Activated T-helper 1 cell treated with anti-CD3 and anti-CD28 coated beads, Interleukin-12 subunit alpha, Interleukin-12 subunit beta, Interleukin-2, Interleukin-4 antibody, amounts not matched to agents 30 ng/mL and 10 ng/mL and 1 ng/mL, durations not matched to agents 14 hours and 24 hours and 36 hours (primary cell): ENCODE measurements at regions of chr4 and their contacts with region 1.

Region 1: DNA sequence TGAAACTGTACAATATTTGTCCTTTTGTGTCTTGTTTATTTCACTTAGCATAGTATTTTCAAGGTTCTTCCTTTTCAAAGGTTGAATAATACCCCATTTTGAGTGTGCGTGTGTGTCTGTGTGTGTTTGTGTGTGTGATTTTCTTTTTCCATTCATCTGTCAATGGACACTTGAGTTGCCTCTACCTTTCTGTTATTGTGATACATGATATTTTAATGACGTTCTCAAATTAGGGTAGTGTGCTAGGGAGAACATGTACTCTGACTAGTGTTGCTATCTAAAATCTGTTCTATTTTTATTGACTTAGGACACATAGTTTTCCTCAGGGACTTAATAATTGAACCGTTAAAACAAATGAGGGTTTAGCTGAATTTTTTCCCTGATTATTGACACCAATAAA is 9.9 kb downstream of the MMRN1 start:
- DNase-seq: no peak
- H3K4me3 Mint-ChIP-seq: no peak overlapping the region
- H3K27ac Mint-ChIP-seq: no peak overlapping the region
- H3K4me1 Mint-ChIP-seq: no peaks in the 10 kb centered on the region
- H3K27me3 Mint-ChIP-seq: peaks cover 2% of the 10 kb centered on the region

Region 2: DNA sequence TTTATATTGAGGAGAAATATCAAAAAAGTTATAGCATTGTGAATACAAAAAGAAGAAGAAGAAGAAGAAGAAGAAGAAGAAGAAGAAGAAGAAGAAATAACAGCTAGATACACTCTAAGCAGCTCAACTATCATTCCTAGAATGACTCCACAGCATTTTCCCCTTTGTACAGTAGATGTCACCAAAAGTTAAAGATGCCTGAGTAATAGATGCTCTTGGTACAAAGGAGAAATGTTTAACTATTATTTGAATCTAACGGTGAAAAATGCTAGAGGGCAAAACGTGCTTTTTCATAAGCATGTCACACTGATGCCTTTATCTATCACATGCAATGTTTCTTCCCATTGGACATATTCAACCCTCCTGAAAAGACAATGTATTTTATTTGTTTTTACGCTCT is 418.5 kb before region 1 on chr4:
- intact Hi-C with region 1: loop called (anchors 5 kb)
- DNase-seq: no peak
- H3K4me3 Mint-ChIP-seq: no peak overlapping the region
- H3K27ac Mint-ChIP-seq: no peak overlapping the region
- H3K4me1 Mint-ChIP-seq: no peaks in the 10 kb centered on the region
- H3K27me3 Mint-ChIP-seq: peaks cover 2% of the 10 kb centered on the region